AG04450 (cell line): ENCODE measurements at regions of chr6 and their contacts with region 1.

Region 1: DNA sequence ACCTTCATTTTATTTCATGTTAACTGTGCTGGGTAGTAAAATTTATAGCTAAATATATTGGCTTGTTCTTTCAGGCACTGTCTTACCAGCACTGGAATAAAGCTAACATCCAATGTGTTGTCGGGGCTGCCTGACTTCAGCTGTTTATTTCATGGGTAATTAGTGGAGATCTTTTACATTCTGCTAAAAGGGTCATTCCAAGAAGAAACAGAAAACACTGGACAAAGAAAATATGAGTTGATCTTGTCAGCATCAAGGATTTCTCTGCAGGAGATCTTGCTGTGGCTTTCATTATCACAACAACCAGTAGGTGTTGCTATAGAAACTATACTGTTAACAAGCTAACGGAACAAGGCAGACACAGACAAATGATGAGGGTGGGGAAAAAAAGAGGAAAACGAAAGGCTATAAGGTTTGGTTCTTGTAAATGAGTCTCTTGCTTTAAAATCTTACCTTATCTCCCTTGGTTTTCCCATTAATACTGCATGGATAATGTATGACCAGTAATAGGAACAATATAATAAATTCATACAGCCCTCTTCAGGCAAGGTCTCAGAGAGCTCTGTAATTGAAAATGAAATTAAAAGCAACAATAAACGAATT is 206.8 kb downstream of the SIM1 start:
- DNase-seq: peak; percentile 15
- H3K4me3 ChIP-seq: peak overlapping the region; percentile 21; the same call in 1 of the 2 replicates
- H3K27ac ChIP-seq: no peak overlapping the region
- H3K27me3 ChIP-seq: no peaks in the 10 kb centered on the region
- CTCF ChIP-seq: peak; percentile 27

Region 2: DNA sequence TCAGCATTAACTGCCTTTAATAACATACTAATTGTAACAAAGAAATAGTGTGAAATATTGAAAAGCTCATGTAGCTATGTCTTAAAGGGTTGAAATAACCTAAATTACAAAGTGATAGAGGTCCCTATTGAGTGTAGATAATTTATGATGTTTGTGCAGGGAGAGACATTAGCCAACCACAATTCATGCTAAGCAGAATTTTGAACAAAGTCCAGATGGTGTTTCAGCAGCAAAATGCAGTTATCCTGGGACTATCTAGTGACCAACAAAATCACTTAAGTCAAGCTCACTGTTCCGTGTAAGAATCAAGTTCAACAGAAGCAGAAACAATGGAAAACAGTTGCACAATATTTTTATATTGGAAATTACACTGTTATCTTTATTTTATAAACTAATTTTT is 11.7 kb before region 1 on chr6:
- CTCF ChIA-PET with region 1: interaction called, 11 read pairs
- POLR2A ChIA-PET with region 1: no interaction called
- DNase-seq: no peak
- H3K4me3 ChIP-seq: no peak overlapping the region
- H3K27ac ChIP-seq: no peak overlapping the region
- H3K27me3 ChIP-seq: no peaks in the 10 kb centered on the region
- CTCF ChIP-seq: no peak